Heart right ventricle (tissue), 16 donors: ENCODE measurements at regions of chr18 and their contacts with region 1.

Region 1: GRCh38 chr18:78352910-78353309 is 626.7 kb upstream of the SALL3 start:
- DNase-seq: no peak
- ATAC-seq: no peak
- H3K4me3 ChIP-seq: no peak overlapping the region
- H3K27ac ChIP-seq: no peak overlapping the region
- H3K4me1 ChIP-seq: no peaks in the 10 kb centered on the region
- H3K27me3 ChIP-seq: no peaks in the 10 kb centered on the region
- CTCF ChIP-seq: no peak

Region 2: GRCh38 chr18:78410094-78410786 is 57.3 kb after region 1 on chr18:
- intact Hi-C with region 1: loop called in 1 of 10 experiments (anchors 10 kb)
- DNase-seq: no peak
- ATAC-seq: no peak
- H3K4me3 ChIP-seq: no peak overlapping the region
- H3K27ac ChIP-seq: no peak overlapping the region
- H3K4me1 ChIP-seq: no peaks in the 10 kb centered on the region
- H3K27me3 ChIP-seq: peaks cover 0 to 9% (median 0%) of the 10 kb centered on the region in 7 donors
- CTCF ChIP-seq: no peak